Right lobe of liver (tissue), 6 donors: ENCODE measurements at regions of chr3 and their contacts with region 1.

Region 1: DNA sequence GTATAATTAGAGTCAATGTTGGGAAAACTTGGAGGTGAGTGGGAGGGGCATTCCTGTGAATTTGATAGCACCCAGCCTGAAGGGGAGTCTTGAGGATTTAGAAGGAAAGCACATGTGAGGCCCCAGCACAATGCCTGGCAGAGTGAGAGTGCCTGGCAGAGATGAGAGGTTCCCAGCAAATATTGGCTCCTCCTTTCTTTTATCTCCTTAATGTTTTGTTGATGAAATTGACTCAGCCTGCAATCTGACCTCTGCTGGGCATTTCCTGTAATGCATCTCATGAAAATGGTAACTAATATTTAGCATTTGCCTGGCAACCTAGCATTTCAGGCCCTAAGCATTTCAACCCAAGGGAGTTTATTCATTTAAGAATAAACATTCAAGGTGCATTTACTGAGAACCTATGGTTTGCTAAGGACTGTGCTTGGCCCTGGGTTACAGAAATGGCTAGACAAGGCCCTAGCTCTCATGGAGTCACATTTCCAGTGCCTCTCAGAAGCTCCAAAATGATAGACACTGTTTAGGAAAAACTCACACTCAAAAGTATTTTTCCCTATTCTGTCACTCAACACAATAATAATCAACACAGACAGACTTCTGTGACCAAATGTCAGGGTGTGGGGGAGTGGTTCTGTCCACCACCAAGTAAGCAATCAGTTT is 19.0 kb downstream of the PDHB start:
- DNase-seq: no peak
- ATAC-seq: peak; percentile 71 to 85 (median 82)
- H3K4me3 ChIP-seq: no peak overlapping the region
- H3K27ac ChIP-seq: no peak overlapping the region
- H3K4me1 ChIP-seq: peaks cover 0 to 21% (median 8%) of the 10 kb centered on the region in 4 donors
- H3K27me3 ChIP-seq: no peaks in the 10 kb centered on the region
- CTCF ChIP-seq: peak; percentile 77 to 87 (median 80)
- POLR2A ChIP-seq: no peak

Region 2: GRCh38 chr3:58188173-58188564 is 226.5 kb before region 1 on chr3:
- intact Hi-C with region 1: loop called in 1 of 2 experiments (anchors 10 kb)
- DNase-seq: no peak
- ATAC-seq: peak in 1 of 4 donors; percentile 3
- H3K4me3 ChIP-seq: no peak overlapping the region
- H3K27ac ChIP-seq: peak overlapping the region; percentile 28 to 83 (median 38)
- H3K4me1 ChIP-seq: peaks cover 3 to 54% (median 27%) of the 10 kb centered on the region in 4 donors
- H3K27me3 ChIP-seq: no peaks in the 10 kb centered on the region
- CTCF ChIP-seq: no peak
- POLR2A ChIP-seq: no peak

Region 3: DNA sequence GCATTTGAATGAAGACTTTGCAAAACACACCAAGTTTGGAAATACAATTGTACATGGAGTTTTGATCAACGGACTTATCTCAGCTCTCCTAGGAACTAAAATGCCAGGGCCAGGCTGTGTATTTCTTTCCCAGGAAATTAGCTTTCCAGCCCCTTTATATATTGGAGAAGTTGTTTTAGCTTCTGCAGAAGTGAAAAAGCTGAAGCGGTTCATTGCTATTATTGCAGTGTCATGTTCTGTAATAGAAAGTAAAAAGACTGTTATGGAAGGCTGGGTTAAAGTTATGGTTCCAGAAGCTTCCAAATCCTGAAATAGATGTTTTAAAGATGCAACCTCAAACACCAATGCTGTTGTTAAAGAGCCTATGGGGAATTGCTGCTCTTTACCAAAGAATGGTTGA is 96.9 kb before region 1 on chr3:
- intact Hi-C with region 1: loop called (anchors 5 to 10 kb)
- DNase-seq: no peak
- ATAC-seq: peak in 1 of 4 donors; percentile 36
- H3K4me3 ChIP-seq: no peak overlapping the region
- H3K27ac ChIP-seq: no peak overlapping the region
- H3K4me1 ChIP-seq: peaks cover 0 to 6% (median 2%) of the 10 kb centered on the region in 4 donors
- H3K27me3 ChIP-seq: no peaks in the 10 kb centered on the region
- CTCF ChIP-seq: no peak
- POLR2A ChIP-seq: no peak

Region 4: DNA sequence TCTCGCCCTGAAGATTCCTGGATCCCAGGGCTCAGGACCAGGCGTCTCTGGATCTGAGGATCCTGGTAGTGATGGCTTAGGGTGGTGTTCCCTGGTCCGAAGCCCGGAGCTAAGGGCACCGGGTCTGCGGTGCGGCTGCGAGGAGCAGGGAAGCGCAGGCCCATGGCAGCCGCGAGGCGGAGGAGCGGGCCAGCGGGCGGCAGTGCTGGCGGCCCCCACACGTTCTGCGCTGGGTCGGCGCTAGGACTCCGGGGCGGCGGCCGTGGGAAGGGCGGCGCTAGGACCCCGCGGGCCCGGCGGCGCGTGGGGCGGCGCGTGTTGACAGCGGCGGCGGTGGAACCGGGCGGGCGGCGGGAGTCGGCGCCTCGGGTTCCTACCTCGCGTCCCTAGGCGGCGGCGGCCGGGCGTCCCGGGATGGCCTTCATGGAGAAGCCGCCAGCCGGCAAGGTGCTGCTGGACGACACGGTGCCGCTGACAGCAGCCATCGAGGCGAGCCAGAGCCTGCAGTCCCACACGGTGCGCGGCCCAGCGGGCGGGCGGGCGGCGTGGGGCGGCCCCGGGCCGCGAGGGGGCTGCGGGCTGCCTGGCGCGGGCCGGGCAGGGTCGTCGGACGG is 82.0 kb before region 1 on chr3 and contains the start of gene PXK:
- intact Hi-C with region 1: loop called in 1 of 2 experiments (anchors 5 kb)
- DNase-seq: peak; percentile 86 to 89 (median 88)
- ATAC-seq: peak; percentile 86 to 96 (median 92)
- H3K4me3 ChIP-seq: peak within 1 kb of the TSS; percentile 61 to 70 (median 67)
- H3K27ac ChIP-seq: peak within 1 kb of the TSS in 1 of 3 donors; percentile 47
- H3K4me1 ChIP-seq: peaks cover 0 to 21% (median 8%) of the 10 kb centered on the region in 4 donors
- H3K27me3 ChIP-seq: no peaks in the 10 kb centered on the region
- CTCF ChIP-seq: no peak
- POLR2A ChIP-seq: peak; percentile 39
- total RNA-seq, gene PXK: 6.6 to 19.4 (median 9.6) TPM

Region 5: DNA sequence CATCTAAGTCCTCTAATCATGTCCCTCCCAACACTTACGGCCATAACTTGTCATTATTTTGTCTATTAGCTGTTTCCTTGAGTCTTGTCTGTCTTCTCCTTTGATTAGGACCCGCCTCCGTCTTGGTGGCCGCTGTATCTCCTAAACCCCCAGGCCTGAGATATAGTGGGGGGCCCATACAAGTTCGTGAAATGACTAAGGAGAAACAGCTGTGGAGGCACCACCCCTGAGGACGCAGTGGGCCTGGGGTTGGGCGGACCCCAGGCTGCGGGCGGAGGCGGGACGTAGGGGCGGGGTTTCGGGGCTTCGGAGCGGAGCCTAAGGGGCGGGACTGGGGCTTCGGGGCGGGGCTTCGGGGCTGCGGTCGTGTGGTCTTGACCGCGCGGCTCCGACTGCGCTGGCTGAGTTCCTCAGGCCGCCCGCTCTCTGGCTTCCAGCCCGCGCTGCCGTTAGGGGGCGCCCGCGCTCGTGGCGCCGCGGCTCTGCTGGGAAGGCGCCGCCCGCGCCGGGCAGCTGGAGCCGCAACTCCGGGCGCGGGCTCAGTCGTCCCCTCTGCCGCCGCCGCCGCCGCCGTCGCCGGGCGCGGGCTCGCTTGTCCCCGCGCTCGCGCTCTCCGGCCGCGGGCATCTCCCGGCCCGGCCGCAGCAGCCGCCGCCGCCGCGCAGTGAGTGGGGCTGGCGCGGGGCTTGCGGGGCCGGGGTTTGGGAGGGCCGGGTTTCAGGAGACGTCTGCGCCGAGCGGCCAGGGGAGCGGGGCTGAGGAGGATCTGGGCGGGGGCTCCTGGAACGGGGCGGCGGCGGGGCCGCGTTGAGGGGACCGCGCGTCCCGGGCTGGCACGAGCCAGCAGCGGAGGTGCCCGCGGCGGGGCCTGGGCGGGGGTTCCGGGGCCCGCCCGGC is 77.1 kb after region 1 on chr3 and contains the start of gene KCTD6:
- intact Hi-C with region 1: no loop called
- DNase-seq: peak; percentile 95
- ATAC-seq: peak; percentile 87 to 96 (median 92)
- H3K4me3 ChIP-seq: peak within 1 kb of the TSS; percentile 68 to 90 (median 72)
- H3K27ac ChIP-seq: peak within 1 kb of the TSS; percentile 61 to 68 (median 64)
- H3K4me1 ChIP-seq: peaks cover 0 to 38% (median 11%) of the 10 kb centered on the region in 4 donors
- H3K27me3 ChIP-seq: no peaks in the 10 kb centered on the region
- CTCF ChIP-seq: peak; percentile 64 to 91 (median 77)
- POLR2A ChIP-seq: peak; percentile 63
- total RNA-seq, gene KCTD6: 4.3 to 9.6 (median 8.0) TPM

Region 6: DNA sequence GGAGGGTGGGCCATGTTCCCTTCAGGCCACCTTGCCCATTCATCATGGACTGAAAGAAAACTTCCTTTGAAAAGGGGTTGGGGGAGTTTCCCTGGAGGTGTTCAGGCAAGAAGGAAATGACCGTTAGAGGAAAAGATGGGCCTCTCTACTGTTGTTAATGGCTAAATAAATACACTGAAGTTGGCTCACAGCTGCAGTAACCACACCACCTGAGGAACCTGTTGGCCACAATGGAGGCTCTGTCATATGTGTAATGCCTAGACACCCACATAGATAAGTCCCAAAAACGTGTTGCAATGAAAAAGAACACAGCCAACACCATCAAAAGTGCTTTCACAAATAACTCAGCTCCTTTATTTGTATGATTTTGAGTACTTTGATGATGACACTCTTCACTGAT is 290.1 kb after region 1 on chr3:
- intact Hi-C with region 1: no loop called
- DNase-seq: no peak
- ATAC-seq: no peak
- H3K4me3 ChIP-seq: no peak overlapping the region
- H3K27ac ChIP-seq: no peak overlapping the region
- H3K4me1 ChIP-seq: peaks cover 0 to 23% (median 8%) of the 10 kb centered on the region in 4 donors
- H3K27me3 ChIP-seq: no peaks in the 10 kb centered on the region
- CTCF ChIP-seq: no peak
- POLR2A ChIP-seq: no peak